GM12878 (cell line): ENCODE measurements at regions of chr17 and their contacts with region 1.

Region 1: GRCh38 chr17:49230636-49231562 is at the start of gene PHOSPHO1:
- DNase-seq: no peak
- ATAC-seq: peak; percentile 94
- H3K4me3 ChIP-seq: peak within 1 kb of the TSS; percentile 49
- H3K27ac ChIP-seq: no peak within 1 kb of the TSS
- H3K4me1 ChIP-seq: no peaks in the 10 kb centered on the region; the same call in 1 of the 2 replicates
- H3K27me3 ChIP-seq: no peaks in the 10 kb centered on the region
- CTCF ChIP-seq: no peak
- EP300 ChIP-seq: no peak
- POLR2A ChIP-seq: peak; percentile 74
- RAD21 ChIP-seq: no peak
- polyA plus RNA-seq, gene PHOSPHO1: 0.04 TPM in 1 of 2 experiments, not detected in the other

Region 2: GRCh38 chr17:49170216-49170615 is 60.7 kb before region 1 on chr17:
- CTCF ChIA-PET with region 1: interaction called, 13 read pairs
- POLR2A ChIA-PET with region 1: no interaction called
- RAD21 ChIA-PET with region 1: no interaction called
- SMC1A ChIA-PET with region 1: interaction called, 5 read pairs
- in situ Hi-C with region 1: loop called (anchors 10 kb)
- intact Hi-C with region 1: no loop called
- DNase-seq: no peak
- ATAC-seq: no peak
- H3K4me3 ChIP-seq: no peak overlapping the region
- H3K27ac ChIP-seq: no peak overlapping the region
- H3K4me1 ChIP-seq: no peaks in the 10 kb centered on the region
- H3K27me3 ChIP-seq: no peaks in the 10 kb centered on the region; a peak in 2 of 4 replicates
- CTCF ChIP-seq: no peak
- EP300 ChIP-seq: no peak
- POLR2A ChIP-seq: no peak
- RAD21 ChIP-seq: no peak

Region 3: GRCh38 chr17:49191917-49192741 is 38.8 kb before region 1 on chr17:
- CTCF ChIA-PET with region 1: interaction called, 89 read pairs
- POLR2A ChIA-PET with region 1: interaction called, 10 read pairs
- RAD21 ChIA-PET with region 1: interaction called, 35 read pairs
- SMC1A ChIA-PET with region 1: interaction called, 24 read pairs
- in situ Hi-C with region 1: no loop called
- intact Hi-C with region 1: no loop called
- DNase-seq: peak; percentile 77
- ATAC-seq: peak; percentile 63
- H3K4me3 ChIP-seq: peak overlapping the region; percentile 85
- H3K27ac ChIP-seq: peak overlapping the region; percentile 98
- H3K4me1 ChIP-seq: peaks cover 28% of the 10 kb centered on the region
- H3K27me3 ChIP-seq: no peaks in the 10 kb centered on the region
- CTCF ChIP-seq: peak; percentile 32 to 54 (median 37); a peak in 4 of 6 replicates
- EP300 ChIP-seq: peak in 1 of 2 experiments; percentile 72; a peak in 1 of 4 replicates
- POLR2A ChIP-seq: peak; percentile 24; the same call in 1 of the 2 replicates
- RAD21 ChIP-seq: peak; percentile 14; the same call in 1 of the 2 replicates

Region 4: DNA sequence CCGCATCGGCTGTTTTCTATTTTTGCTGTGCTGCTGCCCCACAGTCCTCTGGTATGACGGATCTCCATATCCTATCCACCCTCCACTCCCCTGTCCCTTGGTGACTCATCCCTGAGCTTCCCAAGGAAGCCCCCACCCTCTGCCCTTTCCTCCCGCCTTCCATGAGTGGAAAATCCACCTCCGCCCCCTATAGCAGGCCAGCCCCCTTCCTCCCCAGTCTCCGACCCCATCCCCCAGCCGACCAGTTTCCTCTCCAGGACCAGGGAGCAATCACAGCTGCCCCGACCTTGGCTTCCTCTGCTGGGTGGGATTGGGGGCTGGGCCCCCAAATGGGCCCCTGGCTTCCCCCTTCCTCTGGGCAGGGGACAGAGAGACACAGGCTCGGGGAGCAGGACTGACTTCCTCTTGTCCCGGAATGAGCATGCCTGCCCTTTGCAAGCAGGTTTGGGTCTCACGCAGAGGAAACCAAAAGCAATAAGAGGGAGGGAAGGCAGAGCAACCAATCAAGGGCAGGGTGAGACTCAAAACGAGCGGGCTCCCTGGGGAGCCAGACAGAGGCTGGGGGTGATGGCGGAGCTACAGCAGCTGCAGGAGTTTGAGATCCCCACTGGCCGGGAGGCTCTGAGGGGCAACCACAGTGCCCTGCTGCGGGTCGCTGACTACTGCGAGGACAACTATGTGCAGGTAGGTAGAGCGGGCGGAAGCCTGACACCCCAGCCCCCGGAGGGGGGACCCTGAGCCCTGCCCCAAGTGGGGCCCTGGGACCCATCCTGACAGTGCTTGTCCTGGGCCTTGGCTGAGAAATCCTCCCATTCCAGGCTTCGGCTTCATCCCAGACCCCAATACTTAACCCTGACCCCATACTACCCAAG is 20.5 kb before region 1 on chr17 and contains the starts of genes ABI3 and GNGT2:
- CTCF ChIA-PET with region 1: interaction called, 61 read pairs
- POLR2A ChIA-PET with region 1: interaction called, 12 read pairs
- RAD21 ChIA-PET with region 1: interaction called, 51 read pairs
- SMC1A ChIA-PET with region 1: interaction called, 22 read pairs
- in situ Hi-C with region 1: no loop called
- intact Hi-C with region 1: no loop called
- DNase-seq: peak; percentile 92
- ATAC-seq: peak; percentile 90
- H3K4me3 ChIP-seq: peak within 1 kb of the TSS; percentile 98
- H3K27ac ChIP-seq: peak within 1 kb of the TSS; percentile 96
- H3K4me1 ChIP-seq: peaks cover 29% of the 10 kb centered on the region
- H3K27me3 ChIP-seq: no peaks in the 10 kb centered on the region
- CTCF ChIP-seq: no peak
- EP300 ChIP-seq: peak; percentile 29; a peak in 2 of 4 replicates
- POLR2A ChIP-seq: peak; percentile 97
- RAD21 ChIP-seq: peak; percentile 16; the same call in 1 of the 2 replicates
- polyA plus RNA-seq, gene ABI3: 13.4 to 21.7 TPM
- polyA plus RNA-seq, gene GNGT2: 15.3 to 22.6 TPM

Region 5: GRCh38 chr17:49290690-49291359 is 59.9 kb after region 1 on chr17:
- CTCF ChIA-PET with region 1: interaction called, 13 read pairs
- POLR2A ChIA-PET with region 1: no interaction called
- RAD21 ChIA-PET with region 1: no interaction called
- SMC1A ChIA-PET with region 1: no interaction called
- in situ Hi-C with region 1: no loop called
- intact Hi-C with region 1: no loop called
- DNase-seq: no peak
- ATAC-seq: peak; percentile 41; the same call in 1 of the 3 replicates
- H3K4me3 ChIP-seq: no peak overlapping the region
- H3K27ac ChIP-seq: no peak overlapping the region
- H3K4me1 ChIP-seq: no peaks in the 10 kb centered on the region
- H3K27me3 ChIP-seq: no peaks in the 10 kb centered on the region
- CTCF ChIP-seq: peak; percentile 48 to 62 (median 56); a peak in 4 of 6 replicates
- EP300 ChIP-seq: no peak
- POLR2A ChIP-seq: no peak
- RAD21 ChIP-seq: peak; percentile 56